Right cardiac atrium (tissue), 5 donors: ENCODE measurements at regions of chr18 and their contacts with region 1.

Region 1: GRCh38 chr18:24189007-24189528 is 50.2 kb downstream of the CABYR start:
- DNase-seq: no peak
- ATAC-seq: peak in 1 of 2 donors; percentile 76
- H3K4me3 ChIP-seq: no peak overlapping the region
- H3K27ac ChIP-seq: no peak overlapping the region
- H3K4me1 ChIP-seq: no peaks in the 10 kb centered on the region
- H3K27me3 ChIP-seq: no peaks in the 10 kb centered on the region

Region 2: GRCh38 chr18:23844991-23845680 is 343.9 kb before region 1 on chr18:
- intact Hi-C with region 1: no loop called
- DNase-seq: no peak
- ATAC-seq: no peak
- H3K4me3 ChIP-seq: no peak overlapping the region
- H3K27ac ChIP-seq: no peak overlapping the region
- H3K4me1 ChIP-seq: no peaks in the 10 kb centered on the region
- H3K27me3 ChIP-seq: no peaks in the 10 kb centered on the region

Region 3: GRCh38 chr18:24333071-24333470 is 144.0 kb after region 1 on chr18:
- intact Hi-C with region 1: loop called in 1 of 4 experiments (anchors 10 kb)
- DNase-seq: no peak
- ATAC-seq: peak; percentile 69 to 83
- H3K4me3 ChIP-seq: no peak overlapping the region
- H3K27ac ChIP-seq: no peak overlapping the region
- H3K4me1 ChIP-seq: no peaks in the 10 kb centered on the region
- H3K27me3 ChIP-seq: no peaks in the 10 kb centered on the region